A549 (cell line): ENCODE measurements at regions of chr2 and their contacts with region 1.

Region 1: GRCh38 chr2:158745044-158745865 is 49.9 kb upstream of the DAPL1 start:
- DNase-seq: peak; percentile 37 to 66
- ATAC-seq: peak; percentile 79 to 91
- H3K4me3 ChIP-seq: no peak overlapping the region
- H3K27ac ChIP-seq: no peak overlapping the region
- H3K4me1 ChIP-seq: no peaks in the 10 kb centered on the region
- CTCF ChIP-seq: peak; percentile 74
- EP300 ChIP-seq: no peak
- POLR2A ChIP-seq: no peak
- RAD21 ChIP-seq: peak; percentile 84 to 88

Region 2: DNA sequence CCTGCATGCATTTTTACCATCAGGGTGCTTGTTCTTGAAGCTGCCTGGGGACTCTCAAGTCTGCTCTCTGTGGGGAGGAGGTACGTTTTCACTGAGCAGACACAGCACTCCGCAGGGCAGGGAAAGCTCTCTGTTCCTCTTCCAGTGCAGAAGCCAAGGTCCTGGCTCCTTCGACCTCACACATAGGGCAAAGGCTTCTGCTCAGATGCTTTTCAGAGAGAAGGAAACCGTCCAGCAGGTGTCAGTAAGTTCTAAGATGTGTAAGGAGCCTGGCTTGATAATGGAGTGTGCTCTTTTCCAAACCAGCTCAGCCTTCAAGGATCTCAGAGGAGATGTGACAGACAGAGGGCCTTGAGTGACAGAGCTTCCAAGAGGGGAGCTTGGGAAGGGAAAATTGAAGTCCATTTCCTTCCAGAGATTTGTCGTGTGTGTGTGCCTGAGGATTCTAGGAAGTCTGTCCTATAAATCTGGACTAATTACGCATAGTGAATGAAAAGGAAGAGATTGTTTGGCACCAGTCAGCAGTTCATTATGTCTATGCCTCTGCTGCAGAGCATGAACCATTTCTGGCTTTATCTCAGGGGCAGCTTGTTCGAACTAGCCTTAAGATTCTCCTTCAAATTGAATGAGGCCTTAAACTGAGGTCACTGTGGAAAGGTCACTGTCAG is 710.9 kb before region 1 on chr2:
- CTCF ChIA-PET with region 1: interaction called, 254 read pairs
- POLR2A ChIA-PET with region 1: no interaction called
- DNase-seq: peak; percentile 26 to 75
- ATAC-seq: peak; percentile 95 to 98
- H3K4me3 ChIP-seq: no peak overlapping the region
- H3K27ac ChIP-seq: no peak overlapping the region
- H3K4me1 ChIP-seq: no peaks in the 10 kb centered on the region
- CTCF ChIP-seq: peak; percentile 68
- EP300 ChIP-seq: no peak
- POLR2A ChIP-seq: no peak
- RAD21 ChIP-seq: peak; percentile 79 to 83

Region 3: DNA sequence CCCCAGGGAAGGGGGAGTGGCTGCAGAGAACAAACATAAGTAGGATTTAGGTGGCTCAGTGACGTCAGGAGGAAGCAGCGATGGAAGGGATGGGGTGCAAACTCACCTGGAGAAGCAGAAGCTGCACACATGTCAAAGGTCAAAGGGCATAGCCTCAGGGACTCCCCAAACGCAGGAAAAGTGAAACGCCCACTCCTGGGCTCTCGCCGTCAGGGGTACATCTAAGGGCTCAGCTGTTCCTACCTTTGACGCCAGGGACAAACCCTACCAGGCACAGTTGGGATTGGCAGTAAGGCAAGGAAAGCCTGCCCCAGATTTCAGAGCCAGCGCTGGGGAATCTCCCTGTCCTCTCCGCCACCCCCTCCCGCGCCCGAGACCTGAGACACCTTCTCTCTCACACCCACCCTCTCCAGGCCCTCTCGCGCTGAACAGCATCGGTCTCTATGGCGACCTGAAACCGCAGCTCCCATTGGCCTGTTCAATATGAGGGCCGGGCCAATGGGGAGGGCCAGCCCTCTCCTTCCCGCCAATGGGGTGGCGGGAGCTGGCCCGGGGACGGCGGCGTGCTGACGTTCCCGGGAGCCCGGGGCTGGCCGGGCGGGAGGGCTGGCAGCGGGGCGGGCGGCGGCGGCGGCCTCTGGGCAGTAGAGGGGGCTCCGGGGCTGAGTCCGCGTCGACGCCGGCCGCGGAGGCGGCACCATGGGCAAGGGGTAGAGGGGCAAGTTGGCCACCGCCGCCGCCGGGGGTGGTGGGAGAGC is 288.8 kb before region 1 on chr2 and contains the starts of genes CCDC148 and PKP4:
- CTCF ChIA-PET with region 1: interaction called, 13 read pairs
- POLR2A ChIA-PET with region 1: no interaction called
- DNase-seq: peak; percentile 86 to 91
- ATAC-seq: peak; percentile 81 to 89
- H3K4me3 ChIP-seq: peak within 1 kb of the TSS; percentile 94
- H3K27ac ChIP-seq: peak within 1 kb of the TSS; percentile 95 to 98
- H3K4me1 ChIP-seq: peaks cover 32% of the 10 kb centered on the region
- CTCF ChIP-seq: peak; percentile 24
- EP300 ChIP-seq: no peak
- POLR2A ChIP-seq: peak; percentile 47; the same call in 1 of the 2 replicates
- RAD21 ChIP-seq: peak in 1 of 2 experiments; percentile 47; a peak in 2 of 5 replicates
- polyA plus RNA-seq, gene CCDC148: 0.56 and 0.85 TPM in 2 replicates
- polyA plus RNA-seq, gene PKP4: 56.6 and 57.9 TPM in 2 replicates

Region 4: GRCh38 chr2:158600155-158600802 is 145.0 kb before region 1 on chr2:
- CTCF ChIA-PET with region 1: no interaction called
- POLR2A ChIA-PET with region 1: no interaction called
- DNase-seq: peak; percentile 4 to 40
- ATAC-seq: peak; percentile 70 to 72
- H3K4me3 ChIP-seq: no peak overlapping the region
- H3K27ac ChIP-seq: peak overlapping the region in 1 of 2 experiments; percentile 39; a peak in 1 of 6 replicates
- H3K4me1 ChIP-seq: peaks cover 22% of the 10 kb centered on the region
- CTCF ChIP-seq: no peak
- EP300 ChIP-seq: no peak
- POLR2A ChIP-seq: no peak
- RAD21 ChIP-seq: no peak

Region 5: DNA sequence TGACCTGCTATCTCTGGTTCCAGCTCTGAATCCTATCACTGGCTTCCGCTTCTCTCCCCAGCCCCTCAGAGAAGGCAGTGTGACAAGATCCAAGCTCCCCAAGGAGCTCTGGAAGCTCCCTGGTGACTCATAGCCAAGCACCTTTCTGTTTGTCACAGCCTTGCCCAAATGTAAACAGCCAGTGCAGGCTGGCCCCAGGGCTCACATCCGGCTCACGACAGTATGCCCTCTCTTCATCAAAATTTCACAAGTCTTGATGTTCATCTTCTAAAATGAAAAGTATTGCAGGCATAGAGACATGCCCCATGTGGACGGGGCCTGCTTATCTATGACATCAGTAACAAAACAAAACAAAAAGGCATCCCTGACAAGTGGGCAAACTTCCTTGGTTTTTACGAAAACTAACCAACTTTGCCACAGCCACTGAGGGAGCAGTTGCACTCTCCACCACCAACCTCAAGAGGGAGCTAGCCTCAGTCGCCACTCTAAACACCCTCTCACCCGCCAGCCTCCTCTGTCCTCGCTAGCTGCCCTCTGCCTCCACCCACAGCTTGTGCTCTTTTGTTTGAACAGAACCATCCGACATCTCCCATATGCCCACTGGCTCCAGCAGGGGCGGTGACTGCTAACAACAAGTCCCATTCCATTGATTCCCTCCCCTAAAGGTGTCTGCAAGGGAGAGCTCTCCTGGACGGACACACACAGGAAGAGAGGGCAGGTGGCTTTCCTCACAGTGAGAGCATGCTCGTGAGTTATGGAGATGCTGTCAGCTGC is 21.2 kb before region 1 on chr2:
- CTCF ChIA-PET with region 1: interaction called, 22 read pairs
- POLR2A ChIA-PET with region 1: no interaction called
- DNase-seq: peak; percentile 84 to 89
- ATAC-seq: peak; percentile 82 to 92
- H3K4me3 ChIP-seq: peak overlapping the region; percentile 34
- H3K27ac ChIP-seq: peak overlapping the region; percentile 71 to 85
- H3K4me1 ChIP-seq: peaks cover 32% of the 10 kb centered on the region
- CTCF ChIP-seq: peak; percentile 59
- EP300 ChIP-seq: no peak
- POLR2A ChIP-seq: no peak
- RAD21 ChIP-seq: peak; percentile 31 to 42; a peak in 3 of 5 replicates

Region 6: GRCh38 chr2:159635006-159635789 is 889.9 kb after region 1 on chr2:
- CTCF ChIA-PET with region 1: no interaction called
- POLR2A ChIA-PET with region 1: no interaction called
- DNase-seq: no peak
- ATAC-seq: no peak
- H3K4me3 ChIP-seq: no peak overlapping the region
- H3K27ac ChIP-seq: peak overlapping the region; percentile 18 to 29; a peak in 3 of 6 replicates
- H3K4me1 ChIP-seq: peaks cover 24% of the 10 kb centered on the region
- CTCF ChIP-seq: no peak
- EP300 ChIP-seq: no peak
- POLR2A ChIP-seq: no peak
- RAD21 ChIP-seq: no peak

Region 7: GRCh38 chr2:159695795-159696448 is 950.7 kb after region 1 on chr2:
- CTCF ChIA-PET with region 1: no interaction called
- POLR2A ChIA-PET with region 1: no interaction called
- DNase-seq: no peak
- ATAC-seq: no peak
- H3K4me3 ChIP-seq: no peak overlapping the region
- H3K27ac ChIP-seq: no peak overlapping the region
- H3K4me1 ChIP-seq: no peaks in the 10 kb centered on the region
- CTCF ChIP-seq: no peak
- EP300 ChIP-seq: no peak
- POLR2A ChIP-seq: no peak
- RAD21 ChIP-seq: no peak